Activated T-helper 1 cell treated with anti-CD3 and anti-CD28 coated beads, Interleukin-12 subunit alpha, Interleukin-12 subunit beta, Interleukin-2, Interleukin-4 antibody, amounts not matched to agents 30 ng/mL and 10 ng/mL and 1 ng/mL, durations not matched to agents 14 hours and 24 hours and 36 hours (primary cell): ENCODE measurements at regions of chr1 and their contacts with region 1.

Region 1: DNA sequence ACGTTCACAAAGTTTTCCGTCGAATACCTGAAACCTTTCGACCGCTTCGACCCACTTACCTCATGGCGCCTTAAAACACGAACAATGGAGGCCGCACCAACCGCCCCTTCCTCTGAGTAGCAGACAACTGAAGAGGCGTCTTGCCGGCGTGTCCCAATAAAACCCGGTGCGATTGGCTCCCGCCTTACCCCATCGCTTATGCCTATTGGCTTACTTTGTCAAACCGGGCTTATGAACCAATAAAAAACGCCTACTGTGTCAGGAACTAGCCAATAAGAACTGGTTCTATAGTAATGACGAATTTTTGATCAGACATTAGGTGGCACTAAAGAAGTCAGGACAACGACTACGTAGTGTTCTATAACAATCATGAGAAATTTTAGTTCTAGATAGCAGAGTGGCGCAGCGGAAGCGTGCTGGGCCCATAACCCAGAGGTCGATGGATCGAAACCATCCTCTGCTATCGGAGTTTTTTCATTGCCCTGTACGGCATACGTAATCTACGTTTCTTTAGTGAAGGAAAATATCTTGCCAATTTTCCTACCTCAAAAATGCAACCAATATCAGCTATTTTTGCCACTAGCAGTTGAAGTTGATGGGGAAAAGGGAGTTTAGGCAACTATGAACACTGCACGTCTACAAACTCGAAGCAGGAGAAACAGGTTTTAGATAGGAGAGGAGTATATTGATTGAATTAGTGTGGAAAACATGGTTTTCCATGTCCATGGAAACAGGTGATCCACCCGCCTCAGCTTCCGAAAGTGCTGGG is at the start of gene ILF2:
- DNase-seq: peak; percentile 96
- H3K4me3 Mint-ChIP-seq: no peak within 1 kb of the TSS
- H3K27ac Mint-ChIP-seq: peak within 1 kb of the TSS; percentile 56
- H3K4me1 Mint-ChIP-seq: peaks cover 29% of the 10 kb centered on the region
- H3K27me3 Mint-ChIP-seq: no peaks in the 10 kb centered on the region
- total RNA-seq, gene ILF2: 354 and 366 TPM in 2 replicates

Region 2: GRCh38 chr1:153510984-153511410 is 160.0 kb before region 1 on chr1:
- intact Hi-C with region 1: loop called (anchors 2 kb)
- DNase-seq: peak; percentile 65
- H3K4me3 Mint-ChIP-seq: no peak overlapping the region
- H3K27ac Mint-ChIP-seq: peak overlapping the region; percentile 55
- H3K4me1 Mint-ChIP-seq: peaks cover 21% of the 10 kb centered on the region
- H3K27me3 Mint-ChIP-seq: peaks cover 2% of the 10 kb centered on the region

Region 3: DNA sequence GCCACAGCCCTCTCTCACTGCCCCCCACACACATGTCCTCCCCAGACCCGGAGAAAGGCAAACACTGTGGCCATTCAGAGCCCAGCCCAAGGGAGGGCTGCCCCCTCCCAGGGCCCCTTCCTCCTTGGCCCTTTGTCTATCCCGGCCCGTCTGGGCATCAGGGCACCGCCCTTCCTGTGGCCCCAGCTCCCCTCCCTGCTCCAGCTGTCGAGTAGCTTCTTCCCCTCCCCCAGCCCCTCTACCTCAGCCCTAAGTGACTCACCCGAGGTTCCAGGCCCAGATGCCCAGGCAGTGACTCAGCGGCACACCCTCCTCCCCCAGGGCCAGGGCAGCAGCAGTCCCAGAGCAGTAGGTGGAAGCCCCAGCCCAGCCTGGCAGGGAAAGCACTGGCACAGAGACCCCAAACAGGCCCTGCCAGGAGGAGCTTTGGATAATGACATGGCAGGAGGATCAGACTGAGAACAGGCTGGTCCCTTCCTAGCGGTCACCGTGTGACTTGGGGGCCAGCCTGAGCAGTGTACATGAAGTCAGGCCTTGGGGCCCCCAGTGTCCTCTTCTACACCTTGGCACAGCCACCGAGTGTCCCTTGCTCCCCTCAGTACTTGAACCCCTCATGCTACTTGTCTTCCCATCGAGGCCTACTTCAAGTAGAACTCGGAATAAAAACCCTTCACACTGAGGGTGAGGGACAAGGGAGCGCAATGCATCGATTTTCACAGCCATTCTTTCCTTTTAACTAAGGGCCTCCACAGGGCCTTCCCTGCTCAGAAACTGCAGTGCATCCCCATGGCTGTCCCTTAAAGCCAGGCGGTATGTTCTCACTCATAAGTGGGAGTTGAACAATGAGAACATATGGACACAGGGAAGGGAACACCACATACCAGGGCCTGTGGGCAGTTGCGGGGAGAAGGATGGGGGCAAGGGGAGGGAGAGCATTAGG is 104.3 kb before region 1 on chr1:
- intact Hi-C with region 1: loop called (anchors 2 kb)
- DNase-seq: peak; percentile 72
- H3K4me3 Mint-ChIP-seq: peak overlapping the region; percentile 38
- H3K27ac Mint-ChIP-seq: peak overlapping the region; percentile 89
- H3K4me1 Mint-ChIP-seq: peaks cover 38% of the 10 kb centered on the region
- H3K27me3 Mint-ChIP-seq: peaks cover 1% of the 10 kb centered on the region

Region 4: GRCh38 chr1:153727463-153728304 is 56.6 kb after region 1 on chr1 and contains the start of gene INTS3:
- intact Hi-C with region 1: loop called (anchors 1 kb)
- DNase-seq: peak; percentile 99
- H3K4me3 Mint-ChIP-seq: peak within 1 kb of the TSS; percentile 90
- H3K27ac Mint-ChIP-seq: peak within 1 kb of the TSS; percentile 91
- H3K4me1 Mint-ChIP-seq: peaks cover 35% of the 10 kb centered on the region
- H3K27me3 Mint-ChIP-seq: no peaks in the 10 kb centered on the region
- total RNA-seq, gene INTS3: 57.0 and 57.3 TPM in 2 replicates

Region 5: GRCh38 chr1:153928791-153929341 is 257.8 kb after region 1 on chr1:
- intact Hi-C with region 1: no loop called
- DNase-seq: no peak
- H3K4me3 Mint-ChIP-seq: no peak overlapping the region
- H3K27ac Mint-ChIP-seq: peak overlapping the region; percentile 21
- H3K4me1 Mint-ChIP-seq: peaks cover 18% of the 10 kb centered on the region
- H3K27me3 Mint-ChIP-seq: no peaks in the 10 kb centered on the region

Region 6: DNA sequence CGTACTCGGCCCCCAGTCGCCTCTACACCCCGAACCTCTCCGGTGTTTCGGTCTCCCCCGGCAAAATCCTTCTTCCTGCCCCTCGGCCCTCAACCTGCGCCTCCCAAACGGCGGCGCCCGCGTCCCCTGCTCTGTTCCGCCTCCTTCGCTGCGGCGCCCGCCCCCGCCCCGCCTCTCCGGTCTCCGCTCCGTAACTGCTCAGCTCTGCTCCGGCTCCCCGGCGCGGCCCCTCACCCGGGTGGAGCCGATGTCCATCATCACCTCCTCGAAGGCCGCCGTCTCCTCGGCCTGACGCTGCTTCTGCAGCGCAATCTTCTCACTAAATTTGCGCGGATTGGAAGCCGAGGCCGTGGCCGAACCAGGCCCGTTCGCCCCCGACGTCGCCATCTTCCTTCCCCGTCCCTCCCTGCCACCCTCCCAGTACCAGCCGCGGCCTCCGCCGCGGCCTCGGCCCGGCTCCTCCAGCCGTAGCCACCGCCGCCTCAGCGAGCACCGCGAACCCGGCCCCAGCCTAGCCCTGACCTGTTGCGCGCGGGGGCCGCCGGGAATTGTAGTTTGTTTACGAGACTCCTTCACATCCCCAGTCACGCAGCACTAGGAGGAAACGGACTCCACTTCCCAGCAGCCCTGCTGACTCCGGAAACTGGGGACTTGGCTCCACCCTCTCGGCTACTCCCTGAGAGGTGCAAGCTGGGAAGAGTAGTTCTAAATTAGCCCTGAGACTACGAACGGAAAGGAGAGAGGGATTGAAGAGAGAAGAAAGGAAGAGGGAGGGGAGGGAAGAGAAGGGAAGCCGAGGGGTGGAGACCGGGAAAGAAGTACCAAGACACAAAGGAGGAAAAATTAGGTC is 287.3 kb after region 1 on chr1 and contains the start of gene CRTC2:
- intact Hi-C with region 1: loop called (anchors 1 kb)
- DNase-seq: peak; percentile 96
- H3K4me3 Mint-ChIP-seq: peak within 1 kb of the TSS; percentile 97
- H3K27ac Mint-ChIP-seq: peak within 1 kb of the TSS; percentile 81
- H3K4me1 Mint-ChIP-seq: peaks cover 65% of the 10 kb centered on the region
- H3K27me3 Mint-ChIP-seq: no peaks in the 10 kb centered on the region
- total RNA-seq, gene CRTC2: 62.8 and 76.4 TPM in 2 replicates

Region 7: DNA sequence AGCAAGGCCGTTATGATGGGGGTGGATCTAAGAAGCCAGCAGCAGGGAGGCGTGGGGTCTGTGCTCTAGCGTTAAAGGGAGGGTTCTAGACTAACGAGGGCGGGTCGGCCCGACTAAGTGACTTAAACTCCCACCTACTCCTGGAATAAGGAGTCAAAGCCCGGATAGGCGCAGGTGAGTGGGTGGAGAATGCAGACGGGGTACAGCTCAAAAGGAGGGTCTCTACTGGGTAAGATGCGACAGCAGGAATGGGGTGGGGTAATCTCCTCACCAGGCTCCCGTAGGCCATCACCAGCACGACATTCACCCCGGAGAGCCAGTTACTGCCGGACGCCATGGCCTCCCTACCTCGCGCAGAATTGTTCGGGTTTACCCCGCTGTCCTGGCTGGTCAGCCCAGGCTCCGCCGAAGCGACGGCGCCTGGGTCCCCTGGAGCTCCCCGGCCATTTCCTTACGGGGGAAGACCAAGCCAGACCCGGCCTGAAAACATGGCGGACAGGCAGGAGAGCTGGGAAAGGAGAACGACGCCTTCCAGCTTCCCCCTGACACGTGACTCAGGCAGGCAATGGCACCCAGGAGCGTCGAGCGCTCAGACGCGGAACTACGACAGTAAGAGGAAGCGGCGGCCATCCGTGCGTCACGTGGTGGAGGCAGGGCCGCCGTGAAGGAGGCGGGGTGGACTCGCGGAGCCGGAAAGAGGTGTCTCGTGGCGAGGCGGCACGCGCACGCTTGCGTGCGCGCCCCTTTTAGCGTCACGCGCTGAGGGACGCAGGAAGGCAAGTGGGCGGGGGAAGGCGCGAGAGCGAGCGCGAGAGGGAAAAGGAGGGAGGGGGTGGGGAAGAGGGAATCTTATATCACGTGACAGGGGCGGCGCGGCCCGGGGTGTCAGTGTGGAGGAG is 549.3 kb after region 1 on chr1 and contains the start of gene UBAP2L:
- intact Hi-C with region 1: loop called (anchors 2 kb)
- DNase-seq: peak; percentile 99
- H3K4me3 Mint-ChIP-seq: peak within 1 kb of the TSS; percentile 97
- H3K27ac Mint-ChIP-seq: peak within 1 kb of the TSS; percentile 99
- H3K4me1 Mint-ChIP-seq: peaks cover 62% of the 10 kb centered on the region
- H3K27me3 Mint-ChIP-seq: no peaks in the 10 kb centered on the region
- total RNA-seq, gene UBAP2L: 258 and 284 TPM in 2 replicates